Heart left ventricle (tissue), 16 donors: ENCODE measurements at regions of chr1 and their contacts with region 1.

Region 1: GRCh38 chr1:53061859-53062707 is at the start of gene PODN:
- DNase-seq: peak in 4 of 5 donors; percentile 40 to 75 (median 60)
- ATAC-seq: peak; percentile 4 to 50 (median 35)
- H3K4me3 ChIP-seq: peak within 1 kb of the TSS; percentile 55 to 89 (median 71)
- H3K27ac ChIP-seq: peak within 1 kb of the TSS; percentile 34 to 90 (median 76)
- H3K4me1 ChIP-seq: peaks cover 0 to 49% (median 18%) of the 10 kb centered on the region in 12 donors
- H3K27me3 ChIP-seq: peaks cover 0 to 28% (median 3%) of the 10 kb centered on the region in 9 donors
- CTCF ChIP-seq: no peak
- POLR2A ChIP-seq: no peak
- total RNA-seq, gene PODN: 5.9 to 61.8 (median 18.5) TPM

Region 2: DNA sequence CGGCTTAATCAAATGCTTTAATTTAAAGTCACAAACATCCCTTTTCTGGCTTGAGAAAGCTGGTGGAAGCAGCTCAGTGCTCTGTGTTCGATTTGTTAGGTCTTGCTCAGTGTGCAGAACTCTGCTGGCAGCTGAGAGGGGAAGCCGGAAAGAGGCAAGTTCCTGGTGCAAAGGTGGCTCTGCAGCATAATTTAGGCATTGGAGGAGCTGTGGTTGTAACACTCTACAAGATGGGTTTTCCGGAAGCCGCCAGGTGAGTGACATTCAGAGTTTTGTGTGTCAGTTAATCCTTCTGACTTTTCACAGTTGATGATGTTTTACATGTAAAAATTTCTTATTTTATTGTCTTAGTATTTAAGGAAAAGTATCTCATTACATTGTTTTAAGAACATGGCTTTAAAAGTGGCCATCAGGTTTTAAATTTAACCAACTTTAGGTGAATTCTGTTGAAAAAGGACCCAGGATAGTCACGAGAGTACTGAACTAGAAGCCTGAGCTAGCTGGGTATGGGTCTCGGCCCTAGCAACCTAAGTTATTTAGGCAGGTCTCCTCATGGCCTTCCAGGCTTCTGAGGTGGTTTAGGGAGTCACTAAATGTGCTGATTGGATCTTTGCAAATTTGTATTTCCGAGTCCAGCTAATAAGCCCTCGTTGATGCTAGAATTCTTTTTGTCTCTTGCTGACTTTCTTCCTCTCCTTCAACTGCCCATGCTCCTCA is 47.1 kb before region 1 on chr1:
- intact Hi-C with region 1: loop called in 2 of 10 experiments (anchors 5 kb)
- DNase-seq: peak; percentile 71 to 85 (median 83)
- ATAC-seq: peak; percentile 88 to 99 (median 97)
- H3K4me3 ChIP-seq: peak overlapping the region; percentile 21 to 74 (median 62)
- H3K27ac ChIP-seq: peak overlapping the region in 11 of 12 donors; percentile 1 to 75 (median 66)
- H3K4me1 ChIP-seq: peaks cover 0 to 25% (median 19%) of the 10 kb centered on the region in 12 donors
- H3K27me3 ChIP-seq: no peaks in the 10 kb centered on the region
- CTCF ChIP-seq: no peak
- POLR2A ChIP-seq: no peak

Region 3: DNA sequence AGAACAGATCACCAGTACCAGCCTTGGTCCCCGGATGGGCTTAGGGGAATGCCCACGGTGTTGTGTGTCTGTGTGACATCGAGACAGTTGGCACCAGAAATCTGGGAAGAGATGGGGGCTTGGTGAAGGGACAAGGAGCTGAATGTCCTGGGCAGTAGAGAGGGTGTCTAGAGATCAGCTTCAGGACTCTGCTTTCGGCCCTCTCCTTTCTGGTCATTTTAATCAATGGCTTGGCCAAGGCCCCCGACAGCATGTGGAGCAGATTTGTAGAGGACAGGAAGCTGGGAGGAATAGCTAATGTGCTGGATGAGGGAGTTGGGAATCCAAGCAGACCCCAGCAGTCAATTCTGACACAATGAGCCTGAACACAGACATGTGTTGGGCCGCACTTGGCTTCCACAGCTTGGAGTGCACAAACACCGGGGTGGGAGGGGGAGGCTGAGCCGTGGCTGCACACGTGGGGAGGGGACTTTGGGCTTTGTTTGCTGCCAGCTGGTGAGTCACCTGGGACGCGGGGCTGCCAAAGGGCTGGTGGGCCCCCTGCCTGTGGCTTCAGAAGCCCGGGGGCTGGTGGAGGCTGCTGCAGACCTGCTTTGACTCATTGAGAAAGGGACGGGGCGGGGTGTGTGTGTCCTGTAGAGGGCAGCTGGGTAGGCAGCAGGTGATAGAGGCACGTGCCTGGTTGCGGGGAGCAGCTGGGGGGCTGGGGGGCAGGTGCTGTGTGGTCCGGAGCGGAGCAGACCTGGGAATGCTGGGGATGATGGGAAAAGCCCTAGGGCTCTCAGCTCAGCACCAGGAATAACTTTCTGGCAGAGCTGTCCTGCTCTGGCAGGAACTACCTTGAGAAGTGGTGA is 59.5 kb after region 1 on chr1:
- intact Hi-C with region 1: loop called in 1 of 10 experiments (anchors 10 kb)
- DNase-seq: peak; percentile 77 to 86 (median 82)
- ATAC-seq: peak; percentile 15 to 66 (median 38)
- H3K4me3 ChIP-seq: no peak overlapping the region
- H3K27ac ChIP-seq: peak overlapping the region in 11 of 12 donors; percentile 41 to 93 (median 81)
- H3K4me1 ChIP-seq: peaks cover 0 to 62% (median 42%) of the 10 kb centered on the region in 12 donors
- H3K27me3 ChIP-seq: no peaks in the 10 kb centered on the region
- CTCF ChIP-seq: no peak
- POLR2A ChIP-seq: no peak

Region 4: DNA sequence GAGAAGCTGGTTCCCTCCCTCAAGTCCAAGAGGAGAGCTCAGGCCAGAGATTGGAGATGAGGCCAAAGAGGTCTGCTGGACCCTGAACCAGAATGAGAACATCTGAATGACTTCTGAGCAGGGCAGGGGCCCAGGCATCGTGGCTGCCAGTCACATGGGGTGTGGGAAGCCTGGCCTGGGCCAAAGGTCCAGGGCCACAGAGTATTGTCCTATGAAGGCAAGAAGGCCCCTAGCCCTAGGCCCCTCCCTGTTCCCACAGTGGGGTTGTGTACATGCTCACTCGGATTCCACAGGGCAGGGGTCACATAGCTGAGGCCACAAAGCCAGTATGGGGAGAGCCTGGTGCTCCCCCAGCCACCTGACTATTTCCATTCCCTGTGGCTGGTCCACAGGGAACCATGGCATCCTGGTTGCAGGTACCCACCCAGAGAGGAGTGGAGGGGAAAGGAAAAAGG is 98.9 kb after region 1 on chr1:
- intact Hi-C with region 1: no loop called
- DNase-seq: no peak
- ATAC-seq: no peak
- H3K4me3 ChIP-seq: no peak overlapping the region
- H3K27ac ChIP-seq: no peak overlapping the region
- H3K4me1 ChIP-seq: peaks cover 0 to 3% (median 0%) of the 10 kb centered on the region in 12 donors
- H3K27me3 ChIP-seq: peaks cover 0 to 4% (median 0%) of the 10 kb centered on the region in 9 donors
- CTCF ChIP-seq: no peak
- POLR2A ChIP-seq: no peak

Region 5: GRCh38 chr1:53172426-53173128 is 110.5 kb after region 1 on chr1:
- intact Hi-C with region 1: loop called in 2 of 10 experiments (anchors 5 to 10 kb)
- DNase-seq: no peak
- ATAC-seq: peak; percentile 28 to 47 (median 40)
- H3K4me3 ChIP-seq: no peak overlapping the region
- H3K27ac ChIP-seq: peak overlapping the region in 2 of 12 donors; percentile 13 to 30
- H3K4me1 ChIP-seq: peaks cover 0 to 32% (median 11%) of the 10 kb centered on the region in 12 donors
- H3K27me3 ChIP-seq: no peaks in the 10 kb centered on the region
- CTCF ChIP-seq: peak in 7 of 12 donors; percentile 11 to 43 (median 35)
- POLR2A ChIP-seq: no peak